ENCODE measurements at regions of chr14 and their contacts with region 1.

Region 1: DNA sequence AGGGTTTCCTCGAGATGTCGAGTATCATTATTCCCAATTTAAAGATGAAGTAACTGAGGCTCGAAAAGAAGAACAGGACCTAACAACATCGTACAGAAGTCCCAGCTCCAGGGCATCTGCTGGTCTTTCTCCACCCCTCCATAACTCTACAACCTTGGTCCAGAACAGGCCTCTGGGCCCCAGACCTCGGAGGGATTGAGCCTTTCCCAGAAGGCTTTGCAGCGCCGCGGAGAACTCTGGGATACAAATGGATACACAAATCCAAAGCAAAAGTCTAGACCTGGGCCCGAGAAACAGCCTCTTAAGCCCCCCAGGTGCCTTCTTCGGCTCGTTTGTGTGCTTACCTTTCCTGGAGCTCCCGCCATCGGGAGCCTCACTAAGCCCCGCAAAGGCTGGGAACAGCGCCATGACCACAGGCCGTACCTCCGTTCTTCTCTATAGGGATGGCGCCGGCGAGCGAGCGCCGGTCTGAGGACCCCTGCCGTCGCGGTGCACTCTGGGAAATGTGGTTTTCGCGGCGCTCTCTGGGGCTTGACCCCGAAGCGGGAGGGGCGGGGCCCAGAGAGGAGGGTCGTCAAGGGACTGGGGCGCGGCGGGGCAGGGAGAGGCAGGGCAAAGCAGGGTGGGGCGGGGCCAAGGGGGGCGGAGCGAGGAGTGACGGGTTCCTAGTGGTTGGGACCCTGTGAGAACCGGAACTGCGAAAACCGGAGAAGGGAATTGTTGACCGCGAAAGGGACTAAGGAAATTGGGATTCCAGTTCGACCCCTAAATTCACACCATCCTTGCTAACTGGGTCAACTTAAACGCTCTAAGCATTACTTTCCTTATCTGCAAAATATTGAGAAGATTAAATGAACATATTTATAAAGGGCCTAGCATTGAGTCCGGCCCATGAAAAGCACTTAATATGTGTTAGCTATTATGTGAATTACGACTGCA is at the start of gene NRDE2:
- DNase-seq: peak; percentile 91
- H3K4me3 Mint-ChIP-seq: peak within 1 kb of the TSS; percentile 89
- H3K27ac Mint-ChIP-seq: peak within 1 kb of the TSS; percentile 93
- H3K4me1 Mint-ChIP-seq: peaks cover 29% of the 10 kb centered on the region
- H3K27me3 Mint-ChIP-seq: peaks cover 20% of the 10 kb centered on the region
- total RNA-seq, gene NRDE2: 23.2 and 25.4 TPM in 2 replicates

Region 2: GRCh38 chr14:90060312-90060964 is 271.3 kb before region 1 on chr14:
- intact Hi-C with region 1: no loop called
- DNase-seq: peak; percentile 49
- H3K4me3 Mint-ChIP-seq: peak overlapping the region; percentile 71
- H3K27ac Mint-ChIP-seq: no peak overlapping the region
- H3K4me1 Mint-ChIP-seq: peaks cover 19% of the 10 kb centered on the region
- H3K27me3 Mint-ChIP-seq: peaks cover 72% of the 10 kb centered on the region

Region 3: DNA sequence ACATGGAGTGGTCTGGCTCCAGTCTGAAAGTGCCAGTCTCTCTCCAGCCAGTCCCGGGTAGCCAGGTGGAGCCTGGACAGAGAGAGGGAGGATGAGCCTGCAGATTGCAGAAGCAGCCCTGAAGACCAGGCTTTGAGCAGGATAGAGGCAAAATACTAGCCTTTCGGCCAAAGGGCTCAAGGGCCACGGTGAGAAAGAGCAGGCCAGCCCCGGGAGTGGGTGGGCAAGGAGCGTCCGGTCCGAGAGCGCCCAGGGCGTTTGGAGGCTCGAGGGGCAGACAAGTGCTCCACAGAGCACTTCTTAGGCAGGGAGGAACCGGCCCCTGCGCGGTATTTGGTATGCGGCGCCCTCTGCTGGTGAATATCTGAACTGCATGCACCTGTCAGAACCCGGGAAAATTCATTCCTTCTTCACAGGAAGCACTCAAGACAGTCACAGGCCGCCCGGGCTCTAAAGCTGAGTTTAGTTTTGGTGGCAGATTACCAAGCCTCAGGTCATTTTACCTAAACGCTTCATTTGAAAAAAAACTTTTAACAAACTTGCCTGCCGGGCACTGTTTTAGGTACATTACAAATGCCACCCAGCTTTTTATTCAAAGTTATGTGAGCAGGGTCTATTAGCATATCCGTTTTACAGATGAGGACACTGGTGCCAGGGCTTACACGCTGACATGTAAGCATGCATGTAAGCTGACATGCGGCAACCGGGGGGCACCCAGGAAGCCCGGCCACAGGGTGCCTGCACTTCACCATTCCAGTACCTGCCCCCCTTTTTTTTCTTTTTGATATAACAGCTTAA is 96.4 kb before region 1 on chr14:
- intact Hi-C with region 1: no loop called
- DNase-seq: peak; percentile 58
- H3K4me3 Mint-ChIP-seq: no peak overlapping the region
- H3K27ac Mint-ChIP-seq: no peak overlapping the region
- H3K4me1 Mint-ChIP-seq: peaks cover 3% of the 10 kb centered on the region
- H3K27me3 Mint-ChIP-seq: peaks cover 9% of the 10 kb centered on the region

Region 4: GRCh38 chr14:90301668-90302090 is 30.1 kb before region 1 on chr14:
- intact Hi-C with region 1: loop called (anchors 2 kb)
- DNase-seq: no peak
- H3K4me3 Mint-ChIP-seq: no peak overlapping the region
- H3K27ac Mint-ChIP-seq: no peak overlapping the region
- H3K4me1 Mint-ChIP-seq: peaks cover 8% of the 10 kb centered on the region
- H3K27me3 Mint-ChIP-seq: no peaks in the 10 kb centered on the region